GM12878 (cell line): ENCODE measurements at regions of chr15 and their contacts with region 1.

Region 1: GRCh38 chr15:67839929-67840748 is at the start of gene RNU6-1:
- DNase-seq: peak; percentile 88
- ATAC-seq: peak; percentile 86
- H3K4me3 ChIP-seq: peak within 1 kb of the TSS; percentile 85
- H3K27ac ChIP-seq: peak within 1 kb of the TSS; percentile 83
- H3K4me1 ChIP-seq: peaks cover 23% of the 10 kb centered on the region
- H3K27me3 ChIP-seq: peaks cover 8% of the 10 kb centered on the region in 2 experiments; a peak in 3 of 4 replicates
- CTCF ChIP-seq: no peak
- EP300 ChIP-seq: 0 out of 4 replicates have a peak, but pooled peaks have one; percentile 24
- POLR2A ChIP-seq: peak; percentile 94
- RAD21 ChIP-seq: 0 out of 2 replicates have a peak, but pooled peaks have one; percentile 3
- polyA plus RNA-seq, gene RNU6-1: not detected

Region 2: GRCh38 chr15:66946578-66947164 is 893.5 kb before region 1 on chr15:
- CTCF ChIA-PET with region 1: interaction called, 8 read pairs
- POLR2A ChIA-PET with region 1: no interaction called
- RAD21 ChIA-PET with region 1: interaction called, 8 read pairs
- SMC1A ChIA-PET with region 1: interaction called, 4 read pairs
- in situ Hi-C with region 1: loop called (anchors 5 kb)
- intact Hi-C with region 1: loop called (anchors 5 kb)
- DNase-seq: peak; percentile 39
- ATAC-seq: peak; percentile 87
- H3K4me3 ChIP-seq: no peak overlapping the region
- H3K27ac ChIP-seq: no peak overlapping the region
- H3K4me1 ChIP-seq: peaks cover 6% of the 10 kb centered on the region
- H3K27me3 ChIP-seq: no peaks in the 10 kb centered on the region; a peak in 1 of 4 replicates
- CTCF ChIP-seq: peak; percentile 85 to 97 (median 95)
- EP300 ChIP-seq: no peak
- POLR2A ChIP-seq: no peak
- RAD21 ChIP-seq: peak; percentile 98

Region 3: GRCh38 chr15:67501177-67501835 is 338.8 kb before region 1 on chr15:
- CTCF ChIA-PET with region 1: interaction called, 49 read pairs
- POLR2A ChIA-PET with region 1: no interaction called
- RAD21 ChIA-PET with region 1: interaction called, 26 read pairs
- SMC1A ChIA-PET with region 1: interaction called, 15 read pairs
- in situ Hi-C with region 1: no loop called
- intact Hi-C with region 1: loop called (anchors 1 kb)
- DNase-seq: no peak
- ATAC-seq: peak; percentile 78
- H3K4me3 ChIP-seq: no peak overlapping the region
- H3K27ac ChIP-seq: no peak overlapping the region
- H3K4me1 ChIP-seq: peaks cover 6% of the 10 kb centered on the region; the same call in 1 of the 2 replicates
- H3K27me3 ChIP-seq: no peaks in the 10 kb centered on the region
- CTCF ChIP-seq: peak; percentile 23 to 64 (median 41); a peak in 4 of 6 replicates
- EP300 ChIP-seq: no peak
- POLR2A ChIP-seq: no peak
- RAD21 ChIP-seq: peak; percentile 58

Region 4: DNA sequence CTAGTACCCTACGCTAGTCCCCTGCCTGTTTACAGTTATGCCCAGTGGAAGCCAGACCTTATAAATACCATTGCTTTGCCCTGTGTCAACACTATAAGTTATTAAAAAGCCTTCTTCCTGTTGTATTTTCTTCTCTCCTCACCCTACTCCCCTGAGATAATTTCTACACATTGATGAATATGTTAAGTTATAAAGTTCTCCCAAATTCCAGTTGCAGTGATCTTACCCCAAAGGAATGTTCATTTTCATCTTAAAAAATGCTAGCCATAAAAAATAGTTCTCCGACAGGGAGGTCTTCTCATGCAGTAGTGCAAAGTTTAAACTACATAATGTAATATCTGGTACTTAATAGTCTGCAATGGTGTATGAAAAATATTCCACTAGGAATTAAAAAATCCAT is 239.1 kb before region 1 on chr15:
- CTCF ChIA-PET with region 1: no interaction called
- POLR2A ChIA-PET with region 1: no interaction called
- RAD21 ChIA-PET with region 1: no interaction called
- SMC1A ChIA-PET with region 1: no interaction called
- in situ Hi-C with region 1: no loop called
- intact Hi-C with region 1: loop called (anchors 10 kb)
- DNase-seq: no peak
- ATAC-seq: no peak
- H3K4me3 ChIP-seq: no peak overlapping the region
- H3K27ac ChIP-seq: no peak overlapping the region
- H3K4me1 ChIP-seq: no peaks in the 10 kb centered on the region
- H3K27me3 ChIP-seq: no peaks in the 10 kb centered on the region
- CTCF ChIP-seq: no peak
- EP300 ChIP-seq: no peak
- POLR2A ChIP-seq: no peak
- RAD21 ChIP-seq: no peak

Region 5: DNA sequence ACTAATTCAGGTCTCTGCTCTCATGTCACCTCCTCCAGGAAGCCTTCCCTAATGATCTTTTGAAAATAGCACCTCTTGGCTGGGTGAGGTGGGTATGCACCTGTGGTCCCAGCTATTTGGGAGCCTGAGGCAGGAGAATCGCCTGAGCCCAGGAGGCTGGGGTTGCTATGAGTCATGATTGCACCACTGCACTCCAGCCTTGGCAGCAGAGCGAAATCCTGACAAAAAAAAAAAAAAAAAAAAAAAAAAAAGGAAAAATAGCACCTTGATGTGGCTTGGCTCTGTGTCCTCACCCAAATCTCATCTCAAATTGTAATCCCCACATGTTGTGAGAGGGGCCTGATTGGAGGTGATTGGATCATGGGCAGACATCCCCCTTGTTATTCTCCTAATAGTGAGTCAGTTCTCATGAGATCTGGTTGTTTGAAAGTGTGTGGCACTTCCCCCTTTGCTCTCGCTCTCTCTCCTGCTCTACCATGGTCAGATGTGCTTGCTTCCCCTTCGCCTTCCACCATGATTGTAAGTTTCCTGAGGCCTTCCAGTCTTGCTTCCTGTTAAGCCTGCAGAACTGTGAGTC is 10.9 kb after region 1 on chr15:
- CTCF ChIA-PET with region 1: interaction called, 10 read pairs
- POLR2A ChIA-PET with region 1: interaction called, 17 read pairs
- RAD21 ChIA-PET with region 1: interaction called, 28 read pairs
- SMC1A ChIA-PET with region 1: interaction called, 29 read pairs
- in situ Hi-C with region 1: no loop called
- intact Hi-C with region 1: no loop called
- DNase-seq: peak; percentile 52
- ATAC-seq: peak; percentile 59
- H3K4me3 ChIP-seq: no peak overlapping the region
- H3K27ac ChIP-seq: peak overlapping the region; percentile 11; the same call in 1 of the 2 replicates
- H3K4me1 ChIP-seq: peaks cover 30% of the 10 kb centered on the region
- H3K27me3 ChIP-seq: no peaks in the 10 kb centered on the region
- CTCF ChIP-seq: no peak
- EP300 ChIP-seq: no peak
- POLR2A ChIP-seq: no peak
- RAD21 ChIP-seq: no peak

Region 6: GRCh38 chr15:68154923-68155559 is 314.9 kb after region 1 on chr15:
- CTCF ChIA-PET with region 1: interaction called, 7 read pairs
- POLR2A ChIA-PET with region 1: no interaction called
- RAD21 ChIA-PET with region 1: interaction called, 7 read pairs
- SMC1A ChIA-PET with region 1: interaction called, 8 read pairs
- in situ Hi-C with region 1: no loop called
- intact Hi-C with region 1: loop called (anchors 2 kb)
- DNase-seq: no peak
- ATAC-seq: peak; percentile 36; the same call in 1 of the 3 replicates
- H3K4me3 ChIP-seq: no peak overlapping the region
- H3K27ac ChIP-seq: no peak overlapping the region
- H3K4me1 ChIP-seq: no peaks in the 10 kb centered on the region
- H3K27me3 ChIP-seq: no peaks in the 10 kb centered on the region
- CTCF ChIP-seq: peak; percentile 54 to 66 (median 62)
- EP300 ChIP-seq: no peak
- POLR2A ChIP-seq: no peak
- RAD21 ChIP-seq: peak; percentile 91